Naive thymus-derived CD4-positive, alpha-beta T cell (primary cell): ENCODE measurements at regions of chr20 and their contacts with region 1.

Region 1: GRCh38 chr20:45971675-45972499 is at the start of gene ZNF335:
- DNase-seq: peak; percentile 89 to 99 (median 96)
- ATAC-seq: peak; percentile 89
- H3K4me3 ChIP-seq: peak within 1 kb of the TSS; percentile 74
- H3K4me3 Mint-ChIP-seq: peak within 1 kb of the TSS; percentile 80 to 100 (median 92)
- H3K27ac ChIP-seq: peak within 1 kb of the TSS; percentile 98
- H3K27ac Mint-ChIP-seq: peak within 1 kb of the TSS; percentile 99 to 100 (median 100)
- H3K4me1 ChIP-seq: peaks cover 24 to 26% of the 10 kb centered on the region in 2 donors
- H3K4me1 Mint-ChIP-seq: peaks cover 17 to 27% (median 24%) of the 10 kb centered on the region in 7 donors
- H3K27me3 ChIP-seq: no peaks in the 10 kb centered on the region
- H3K27me3 Mint-ChIP-seq: peaks cover 0 to 14% (median 0%) of the 10 kb centered on the region in 5 donors
- total RNA-seq, gene ZNF335: 39.9 to 95.2 (median 53.8) TPM

Region 2: DNA sequence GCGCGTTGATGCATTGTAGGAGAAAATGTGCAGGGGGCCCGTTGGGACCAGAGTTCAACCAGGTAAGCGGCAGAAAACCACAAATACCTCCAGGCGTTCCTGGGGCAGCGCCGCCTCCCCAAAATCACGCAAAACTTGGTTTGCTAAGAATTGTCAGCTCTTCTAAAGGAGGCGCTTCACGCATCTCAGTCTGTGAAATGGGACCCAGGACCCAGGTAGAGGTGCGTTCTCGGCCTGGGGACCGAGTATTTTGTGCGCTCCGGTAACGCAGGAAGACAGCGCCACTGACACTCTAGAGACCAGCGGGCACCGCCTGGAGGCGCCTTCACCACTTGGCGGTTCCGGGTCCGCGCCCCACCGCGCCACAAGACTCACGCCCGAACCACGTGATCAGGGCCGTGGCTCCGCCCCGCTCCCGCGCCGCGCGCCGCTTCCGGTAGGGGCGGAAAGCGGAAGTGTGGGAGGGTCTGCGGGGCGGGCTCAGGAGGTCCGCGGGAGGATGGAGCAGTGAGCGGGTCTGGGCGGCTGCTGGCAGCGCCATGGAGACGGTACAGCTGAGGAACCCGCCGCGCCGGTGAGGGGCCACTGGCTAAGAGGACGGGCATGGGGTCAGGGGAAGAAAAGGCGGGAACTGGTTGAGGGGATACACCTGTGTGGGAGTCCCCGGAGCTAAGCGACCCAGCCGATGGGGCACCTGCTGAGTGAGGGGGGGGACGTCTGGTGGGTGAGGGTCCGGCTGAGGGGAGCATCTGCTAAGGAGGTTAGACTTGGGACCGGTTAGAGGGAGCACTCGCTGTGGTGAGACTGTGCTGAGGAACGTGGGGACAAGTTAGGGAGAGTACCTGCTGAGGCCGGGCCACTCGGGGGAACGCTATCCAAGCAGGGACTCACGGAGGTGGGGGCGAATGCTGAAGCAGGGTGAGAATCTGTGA is 1005.6 kb before region 1 on chr20 and contains the start of gene STK4:
- CTCF ChIA-PET with region 1: no interaction called
- POLR2A ChIA-PET with region 1: no interaction called
- intact Hi-C with region 1: loop called in 1 of 2 experiments (anchors 2 kb)
- DNase-seq: peak; percentile 93 to 98 (median 96)
- ATAC-seq: peak; percentile 93
- H3K4me3 ChIP-seq: peak within 1 kb of the TSS; percentile 75
- H3K4me3 Mint-ChIP-seq: peak within 1 kb of the TSS; percentile 93 to 100 (median 95)
- H3K27ac ChIP-seq: peak within 1 kb of the TSS; percentile 91
- H3K27ac Mint-ChIP-seq: peak within 1 kb of the TSS; percentile 80 to 98 (median 90)
- H3K4me1 ChIP-seq: peaks cover 16 to 17% of the 10 kb centered on the region in 2 donors
- H3K4me1 Mint-ChIP-seq: peaks cover 32 to 60% (median 55%) of the 10 kb centered on the region in 7 donors
- H3K27me3 ChIP-seq: no peaks in the 10 kb centered on the region
- H3K27me3 Mint-ChIP-seq: no peaks in the 10 kb centered on the region
- total RNA-seq, gene STK4: 207 to 383 (median 267) TPM

Region 3: GRCh38 chr20:45812157-45813020 is 159.5 kb before region 1 on chr20 and contains the start of gene UBE2C:
- CTCF ChIA-PET with region 1: interaction called, 4 read pairs
- POLR2A ChIA-PET with region 1: no interaction called
- intact Hi-C with region 1: loop called (anchors 1 kb)
- DNase-seq: peak; percentile 73 to 95 (median 92)
- ATAC-seq: peak; percentile 100
- H3K4me3 ChIP-seq: peak within 1 kb of the TSS; percentile 52
- H3K4me3 Mint-ChIP-seq: peak within 1 kb of the TSS; percentile 79 to 96 (median 84)
- H3K27ac ChIP-seq: peak within 1 kb of the TSS; percentile 63
- H3K27ac Mint-ChIP-seq: peak within 1 kb of the TSS; percentile 36 to 87 (median 71)
- H3K4me1 ChIP-seq: peaks cover 0 to 12% of the 10 kb centered on the region in 2 donors
- H3K4me1 Mint-ChIP-seq: peaks cover 3 to 42% (median 16%) of the 10 kb centered on the region in 7 donors
- H3K27me3 ChIP-seq: no peaks in the 10 kb centered on the region
- H3K27me3 Mint-ChIP-seq: no peaks in the 10 kb centered on the region
- total RNA-seq, gene UBE2C: 0.50 to 129 (median 0.75) TPM in 4 of 5 experiments, not detected in the other

Region 4: GRCh38 chr20:45823949-45824835 is 147.7 kb before region 1 on chr20:
- CTCF ChIA-PET with region 1: no interaction called
- POLR2A ChIA-PET with region 1: no interaction called
- intact Hi-C with region 1: no loop called
- DNase-seq: peak; percentile 23 to 48 (median 30)
- ATAC-seq: peak; percentile 70
- H3K4me3 ChIP-seq: peak overlapping the region; percentile 29
- H3K4me3 Mint-ChIP-seq: peak overlapping the region; percentile 75 to 88 (median 84)
- H3K27ac ChIP-seq: no peak overlapping the region
- H3K27ac Mint-ChIP-seq: peak overlapping the region in 5 of 9 donors; percentile 21 to 73 (median 51)
- H3K4me1 ChIP-seq: peaks cover 0 to 7% of the 10 kb centered on the region in 2 donors
- H3K4me1 Mint-ChIP-seq: peaks cover 12 to 26% (median 19%) of the 10 kb centered on the region in 7 donors
- H3K27me3 ChIP-seq: peaks cover 3 to 10% of the 10 kb centered on the region in 2 donors
- H3K27me3 Mint-ChIP-seq: peaks cover 22 to 40% (median 33%) of the 10 kb centered on the region in 5 donors

Region 5: DNA sequence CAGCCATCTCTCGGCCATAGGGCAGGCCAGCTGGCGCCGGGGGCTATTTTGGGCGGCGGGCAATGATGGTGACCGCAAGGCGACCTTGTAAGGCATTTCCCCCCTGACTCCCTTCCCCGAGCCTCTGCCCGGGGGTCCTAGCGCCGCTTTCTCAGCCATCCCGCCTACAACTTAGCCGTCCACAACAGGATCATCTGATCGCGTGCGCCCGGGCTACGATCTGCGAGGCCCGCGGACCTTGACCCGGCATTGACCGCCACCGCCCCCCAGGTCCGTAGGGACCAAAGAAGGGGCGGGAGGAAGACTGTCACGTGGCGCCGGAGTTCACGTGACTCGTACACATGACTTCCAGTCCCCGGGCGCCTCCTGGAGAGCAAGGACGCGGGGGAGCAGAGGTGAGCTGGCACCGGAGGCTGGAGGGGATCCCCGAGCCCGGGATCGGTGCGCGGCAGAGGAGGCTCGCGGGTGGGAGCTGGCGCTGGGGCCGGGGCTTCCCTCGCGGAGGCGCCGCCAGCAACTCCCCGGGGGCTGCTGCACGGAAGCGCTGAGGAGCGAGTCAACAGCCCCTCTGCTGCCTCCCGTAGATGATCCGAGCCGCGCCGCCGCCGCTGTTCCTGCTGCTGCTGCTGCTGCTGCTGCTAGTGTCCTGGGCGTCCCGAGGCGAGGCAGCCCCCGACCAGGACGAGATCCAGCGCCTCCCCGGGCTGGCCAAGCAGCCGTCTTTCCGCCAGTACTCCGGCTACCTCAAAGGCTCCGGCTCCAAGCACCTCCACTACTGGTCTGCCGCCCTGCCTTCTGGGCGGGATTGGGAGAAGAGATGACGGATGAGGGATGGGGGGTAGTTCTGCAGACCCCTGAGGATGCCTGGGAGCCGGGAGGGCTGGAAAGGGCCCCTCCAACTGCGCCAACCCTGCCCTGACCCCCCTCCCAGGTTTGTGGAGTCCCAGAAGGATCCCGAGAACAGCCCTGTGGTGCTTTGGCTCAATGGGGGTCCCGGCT is 80.6 kb before region 1 on chr20 and contains the starts of genes CTSA and NEURL2:
- CTCF ChIA-PET with region 1: interaction called, 4 read pairs
- POLR2A ChIA-PET with region 1: interaction called, 26 read pairs
- intact Hi-C with region 1: loop called (anchors 1 to 2 kb)
- DNase-seq: peak; percentile 62 to 90 (median 83)
- ATAC-seq: peak; percentile 87
- H3K4me3 ChIP-seq: peak within 1 kb of the TSS; percentile 96
- H3K4me3 Mint-ChIP-seq: peak within 1 kb of the TSS; percentile 88 to 95 (median 93)
- H3K27ac ChIP-seq: peak within 1 kb of the TSS; percentile 76
- H3K27ac Mint-ChIP-seq: peak within 1 kb of the TSS; percentile 85 to 97 (median 90)
- H3K4me1 ChIP-seq: peaks cover 22 to 25% of the 10 kb centered on the region in 2 donors
- H3K4me1 Mint-ChIP-seq: peaks cover 17 to 37% (median 26%) of the 10 kb centered on the region in 7 donors
- H3K27me3 ChIP-seq: no peaks in the 10 kb centered on the region
- H3K27me3 Mint-ChIP-seq: no peaks in the 10 kb centered on the region
- total RNA-seq, gene CTSA: 60.5 to 151 (median 65.1) TPM
- total RNA-seq, gene NEURL2: 1.2 to 5.3 (median 4.0) TPM

Region 6: DNA sequence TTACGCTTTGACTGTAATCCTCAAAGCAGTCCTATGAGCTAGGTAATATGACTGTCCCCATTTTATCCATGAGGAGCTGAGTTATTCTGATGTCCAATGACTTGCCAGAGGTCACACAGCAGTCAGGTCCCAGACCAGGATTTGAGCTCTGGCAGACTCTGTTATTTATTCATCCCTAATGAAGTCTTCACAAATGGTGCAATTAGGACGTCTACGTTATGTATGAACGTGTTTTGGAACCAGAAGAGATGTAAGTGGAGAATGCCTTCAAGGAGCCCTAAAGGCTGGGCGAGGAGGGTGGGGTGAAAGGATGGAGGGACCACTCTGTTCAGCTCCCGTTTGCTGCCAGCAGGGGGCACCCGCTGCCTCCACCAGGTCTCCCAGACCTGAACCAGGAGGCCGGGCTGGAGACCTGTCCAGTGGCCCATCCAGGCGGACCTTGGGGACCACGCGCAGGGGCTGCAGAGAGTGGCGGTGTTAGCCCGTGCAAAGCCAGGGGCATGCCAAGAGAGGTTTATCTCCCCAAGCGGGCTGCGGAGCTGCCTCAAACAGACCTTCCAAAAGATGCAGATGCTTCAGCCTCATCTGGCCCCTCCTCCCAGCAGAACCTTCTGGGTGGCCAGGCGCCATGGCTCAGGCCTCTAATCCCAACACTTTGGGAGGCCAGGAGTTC is 15.4 kb after region 1 on chr20:
- CTCF ChIA-PET with region 1: interaction called, 10 read pairs
- POLR2A ChIA-PET with region 1: interaction called, 12 read pairs
- intact Hi-C with region 1: loop called in 1 of 2 experiments (anchors 1 kb)
- DNase-seq: peak; percentile 53 to 80 (median 72)
- ATAC-seq: peak; percentile 98
- H3K4me3 ChIP-seq: no peak overlapping the region
- H3K4me3 Mint-ChIP-seq: no peak overlapping the region
- H3K27ac ChIP-seq: no peak overlapping the region
- H3K27ac Mint-ChIP-seq: no peak overlapping the region
- H3K4me1 ChIP-seq: no peaks in the 10 kb centered on the region
- H3K4me1 Mint-ChIP-seq: peaks cover 0 to 13% (median 0%) of the 10 kb centered on the region in 7 donors
- H3K27me3 ChIP-seq: no peaks in the 10 kb centered on the region
- H3K27me3 Mint-ChIP-seq: peaks cover 0 to 28% (median 5%) of the 10 kb centered on the region in 5 donors

Region 7: GRCh38 chr20:46089417-46090388 is 117.8 kb after region 1 on chr20 and contains the start of gene NCOA5:
- CTCF ChIA-PET with region 1: interaction called, 3 read pairs
- POLR2A ChIA-PET with region 1: no interaction called
- intact Hi-C with region 1: loop called (anchors 1 kb)
- DNase-seq: peak; percentile 90 to 95 (median 94)
- ATAC-seq: peak; percentile 98
- H3K4me3 ChIP-seq: peak within 1 kb of the TSS; percentile 73
- H3K4me3 Mint-ChIP-seq: peak within 1 kb of the TSS; percentile 86 to 95 (median 90)
- H3K27ac ChIP-seq: peak within 1 kb of the TSS; percentile 89
- H3K27ac Mint-ChIP-seq: peak within 1 kb of the TSS; percentile 86 to 95 (median 90)
- H3K4me1 ChIP-seq: peaks cover 24 to 36% of the 10 kb centered on the region in 2 donors
- H3K4me1 Mint-ChIP-seq: peaks cover 29 to 53% (median 51%) of the 10 kb centered on the region in 7 donors
- H3K27me3 ChIP-seq: no peaks in the 10 kb centered on the region
- H3K27me3 Mint-ChIP-seq: no peaks in the 10 kb centered on the region
- total RNA-seq, gene NCOA5: 15.7 to 43.8 (median 39.4) TPM